ENCODE measurements at regions of chr12 and their contacts with region 1.

Region 1: GRCh38 chr12:6423267-6424007 is 21.3 kb upstream of the CD27 start:
- DNase-seq: peak; percentile 70 to 77
- H3K4me3 ChIP-seq: no peak overlapping the region
- H3K27ac ChIP-seq: no peak overlapping the region
- H3K4me1 ChIP-seq: peaks cover 0 to 4% (median under 1%) of the 10 kb centered on the region in 4 experiments; a peak in 2 of 7 replicates
- H3K27me3 ChIP-seq: no peaks in the 10 kb centered on the region; a peak in 1 of 7 replicates
- CTCF ChIP-seq: peak; percentile 84 to 96 (median 95)
- EP300 ChIP-seq: no peak
- POLR2A ChIP-seq: no peak
- RAD21 ChIP-seq: peak; percentile 97 to 99

Region 2: GRCh38 chr12:6434205-6435140 is 11.0 kb after region 1 on chr12:
- CTCF ChIA-PET with region 1: interaction called, 12 read pairs
- POLR2A ChIA-PET with region 1: interaction called, 3 read pairs
- DNase-seq: no peak
- H3K4me3 ChIP-seq: no peak overlapping the region
- H3K27ac ChIP-seq: no peak overlapping the region
- H3K4me1 ChIP-seq: peaks cover 0 to 8% (median under 1%) of the 10 kb centered on the region in 4 experiments; a peak in 3 of 7 replicates
- H3K27me3 ChIP-seq: no peaks in the 10 kb centered on the region
- CTCF ChIP-seq: peak in 1 of 3 experiments; percentile 2; a peak in 1 of 4 replicates
- EP300 ChIP-seq: no peak
- POLR2A ChIP-seq: no peak
- RAD21 ChIP-seq: no peak

Region 3: DNA sequence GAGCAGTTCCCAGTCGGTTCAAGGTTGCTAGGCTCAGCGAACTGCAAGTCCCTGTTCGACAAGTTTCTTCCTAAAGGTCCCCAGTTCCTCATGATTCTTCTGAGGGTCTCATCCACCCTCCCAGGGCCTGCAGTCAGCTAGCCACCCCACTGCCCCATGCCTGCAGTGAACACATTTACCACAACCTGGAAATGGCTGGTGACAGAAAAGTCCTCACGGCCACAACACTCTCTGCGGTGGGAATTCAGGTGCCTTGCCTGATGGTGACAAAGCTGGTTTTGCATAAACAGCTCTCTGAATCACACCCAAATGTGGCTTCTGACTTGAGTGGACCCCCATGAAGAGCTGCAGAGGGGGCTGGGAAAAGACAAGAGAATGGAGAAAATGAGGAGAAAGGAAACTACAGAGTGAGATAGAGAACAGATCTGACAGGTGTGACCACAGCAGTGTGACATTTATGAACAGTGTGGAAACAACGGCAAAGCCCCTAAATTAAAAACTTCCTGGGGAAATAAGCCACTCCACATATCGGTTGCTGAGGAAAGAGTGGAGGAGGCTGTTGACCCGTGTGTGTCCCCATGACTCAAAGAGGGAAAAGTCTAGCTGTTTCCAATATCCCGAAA is 20.0 kb after region 1 on chr12:
- CTCF ChIA-PET with region 1: interaction called, 19 read pairs
- POLR2A ChIA-PET with region 1: interaction called, 6 read pairs
- DNase-seq: no peak
- H3K4me3 ChIP-seq: no peak overlapping the region
- H3K27ac ChIP-seq: no peak overlapping the region
- H3K4me1 ChIP-seq: no peaks in the 10 kb centered on the region
- H3K27me3 ChIP-seq: no peaks in the 10 kb centered on the region
- CTCF ChIP-seq: no peak
- EP300 ChIP-seq: no peak
- POLR2A ChIP-seq: no peak
- RAD21 ChIP-seq: no peak